ENCODE measurements at regions of chr1 and their contacts with region 1.

Region 1: GRCh38 chr1:205480349-205480985 is 24.0 kb upstream of the CDK18 start:
- DNase-seq: peak; percentile 83
- H3K4me3 Mint-ChIP-seq: peak overlapping the region; percentile 32
- H3K27ac Mint-ChIP-seq: peak overlapping the region; percentile 10
- H3K4me1 Mint-ChIP-seq: peaks cover 22% of the 10 kb centered on the region
- H3K27me3 Mint-ChIP-seq: peaks cover 42% of the 10 kb centered on the region

Region 2: GRCh38 chr1:205440476-205441317 is 39.8 kb before region 1 on chr1:
- CTCF ChIA-PET with region 1: interaction called, 10 read pairs
- intact Hi-C with region 1: loop called (anchors 2 kb)
- DNase-seq: peak; percentile 93
- H3K4me3 Mint-ChIP-seq: peak overlapping the region; percentile 72
- H3K27ac Mint-ChIP-seq: peak overlapping the region; percentile 77
- H3K4me1 Mint-ChIP-seq: peaks cover 15% of the 10 kb centered on the region
- H3K27me3 Mint-ChIP-seq: no peaks in the 10 kb centered on the region

Measured in activated naive CD4-positive, alpha-beta T cell treated with anti-CD3 and anti-CD28 coated beads for 36 hours (primary cell).